MCF 10A (cell line): ENCODE measurements at regions of chr17 and their contacts with region 1.

Region 1: DNA sequence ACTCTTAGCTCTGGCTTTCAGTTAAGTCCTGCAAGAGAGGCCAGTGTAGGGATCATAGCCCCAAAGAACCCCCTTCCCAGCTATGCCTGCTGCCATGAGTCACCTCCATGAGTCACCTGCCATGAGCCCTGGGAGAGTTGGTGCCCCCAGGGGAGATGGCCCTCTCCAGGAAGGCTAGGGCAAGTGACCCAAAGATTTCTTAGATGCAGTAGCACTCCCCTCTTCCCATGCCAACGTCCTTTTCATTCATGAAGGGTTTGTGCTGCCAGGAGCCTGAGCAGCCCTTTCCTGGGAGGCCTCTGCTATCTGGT is 78.6 kb upstream of the LGALS9 start:
- DNase-seq: peak; percentile 94
- H3K4me3 Mint-ChIP-seq: no peak overlapping the region
- H3K27ac Mint-ChIP-seq: peak overlapping the region; percentile 20
- H3K4me1 Mint-ChIP-seq: peaks cover 30% of the 10 kb centered on the region
- H3K27me3 Mint-ChIP-seq: no peaks in the 10 kb centered on the region
- CTCF ChIP-seq: no peak

Region 2: DNA sequence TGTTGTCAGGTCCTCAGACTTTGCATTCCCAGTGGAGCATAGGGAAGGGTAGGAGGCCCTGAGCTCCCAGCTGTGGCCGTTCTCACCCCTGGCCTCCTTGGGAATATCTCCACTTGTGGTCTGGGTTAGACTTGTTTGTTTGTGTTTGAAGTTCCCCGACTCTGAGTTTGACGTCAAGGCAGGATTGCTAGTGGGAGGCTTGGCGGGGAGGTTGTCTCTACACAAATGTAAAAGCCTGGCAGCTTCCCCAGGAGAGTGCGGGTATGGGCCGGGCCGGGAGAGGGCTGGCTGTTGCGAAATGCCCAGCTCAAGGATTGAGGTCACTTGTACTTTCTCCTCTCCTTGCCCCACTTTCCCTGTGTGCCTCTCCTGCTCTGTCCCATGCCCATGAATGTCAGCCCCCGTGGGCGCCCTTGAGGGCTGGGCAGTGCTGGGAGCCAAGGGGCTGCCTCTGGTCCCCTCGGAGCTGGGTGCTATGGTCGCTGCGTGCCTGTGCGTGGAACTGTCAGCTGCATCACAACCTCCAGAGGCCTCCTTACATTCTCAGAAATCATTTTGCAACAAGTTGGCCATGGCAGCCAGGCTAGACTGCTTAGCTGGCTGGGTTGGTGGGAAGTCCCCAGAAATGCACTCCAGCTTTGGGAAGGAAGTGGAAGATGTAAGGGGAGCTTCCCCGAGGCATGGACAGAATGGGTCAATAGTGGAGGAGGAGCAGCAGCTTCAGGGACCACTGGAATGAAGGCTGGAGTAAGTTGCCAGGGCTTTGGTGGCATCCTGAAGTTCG is 11.9 kb before region 1 on chr17:
- CTCF ChIA-PET with region 1: no interaction called
- POLR2A ChIA-PET with region 1: interaction called, 15 read pairs
- intact Hi-C with region 1: no loop called
- DNase-seq: peak; percentile 99
- H3K4me3 Mint-ChIP-seq: peak overlapping the region; percentile 32
- H3K27ac Mint-ChIP-seq: peak overlapping the region; percentile 78
- H3K4me1 Mint-ChIP-seq: peaks cover 43% of the 10 kb centered on the region
- H3K27me3 Mint-ChIP-seq: no peaks in the 10 kb centered on the region
- CTCF ChIP-seq: no peak

Region 3: DNA sequence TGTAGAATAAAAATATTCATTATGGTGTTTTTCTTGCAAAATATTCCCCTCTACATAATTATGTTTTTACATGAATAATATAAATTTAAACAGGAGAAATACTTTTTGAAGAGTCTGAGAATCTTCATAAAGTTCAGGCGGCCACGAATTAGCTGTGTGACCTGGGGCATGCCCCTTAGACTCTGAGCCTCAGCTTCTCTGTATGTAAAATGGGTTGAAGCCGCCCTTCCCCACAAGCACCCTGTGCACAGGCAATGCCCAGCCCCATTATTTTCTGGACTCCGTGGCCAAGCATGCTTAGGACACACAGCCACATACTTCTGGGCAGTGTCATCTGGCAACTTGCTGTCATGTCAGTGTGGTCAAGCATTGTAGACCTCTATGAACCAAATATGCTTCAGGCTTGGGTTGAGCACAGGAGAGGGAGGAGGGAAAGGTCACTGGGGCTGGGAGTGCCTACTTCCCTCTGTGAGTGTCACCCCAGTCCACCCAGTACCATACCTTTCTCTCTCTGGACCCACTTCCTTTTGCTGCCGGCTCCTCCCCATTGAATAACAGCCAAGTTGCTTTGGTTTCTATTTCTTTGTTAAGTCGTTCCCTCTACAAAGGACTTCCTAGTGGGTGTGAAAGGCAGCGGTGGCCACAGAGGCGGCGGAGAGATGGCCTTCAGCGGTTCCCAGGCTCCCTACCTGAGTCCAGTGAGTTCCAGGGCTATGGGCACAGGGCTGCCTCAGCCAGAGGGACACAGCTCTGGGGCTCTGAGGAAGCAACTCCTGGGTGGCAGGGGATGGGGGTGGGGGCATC is 78.4 kb after region 1 on chr17 and contains the start of gene LGALS9:
- CTCF ChIA-PET with region 1: no interaction called
- POLR2A ChIA-PET with region 1: no interaction called
- intact Hi-C with region 1: no loop called
- DNase-seq: no peak
- H3K4me3 Mint-ChIP-seq: no peak within 1 kb of the TSS
- H3K27ac Mint-ChIP-seq: peak within 1 kb of the TSS; percentile 5
- H3K4me1 Mint-ChIP-seq: peaks cover 23% of the 10 kb centered on the region
- H3K27me3 Mint-ChIP-seq: no peaks in the 10 kb centered on the region
- CTCF ChIP-seq: no peak
- total RNA-seq, gene LGALS9: 0.44 and 0.54 TPM in 2 replicates

Region 4: DNA sequence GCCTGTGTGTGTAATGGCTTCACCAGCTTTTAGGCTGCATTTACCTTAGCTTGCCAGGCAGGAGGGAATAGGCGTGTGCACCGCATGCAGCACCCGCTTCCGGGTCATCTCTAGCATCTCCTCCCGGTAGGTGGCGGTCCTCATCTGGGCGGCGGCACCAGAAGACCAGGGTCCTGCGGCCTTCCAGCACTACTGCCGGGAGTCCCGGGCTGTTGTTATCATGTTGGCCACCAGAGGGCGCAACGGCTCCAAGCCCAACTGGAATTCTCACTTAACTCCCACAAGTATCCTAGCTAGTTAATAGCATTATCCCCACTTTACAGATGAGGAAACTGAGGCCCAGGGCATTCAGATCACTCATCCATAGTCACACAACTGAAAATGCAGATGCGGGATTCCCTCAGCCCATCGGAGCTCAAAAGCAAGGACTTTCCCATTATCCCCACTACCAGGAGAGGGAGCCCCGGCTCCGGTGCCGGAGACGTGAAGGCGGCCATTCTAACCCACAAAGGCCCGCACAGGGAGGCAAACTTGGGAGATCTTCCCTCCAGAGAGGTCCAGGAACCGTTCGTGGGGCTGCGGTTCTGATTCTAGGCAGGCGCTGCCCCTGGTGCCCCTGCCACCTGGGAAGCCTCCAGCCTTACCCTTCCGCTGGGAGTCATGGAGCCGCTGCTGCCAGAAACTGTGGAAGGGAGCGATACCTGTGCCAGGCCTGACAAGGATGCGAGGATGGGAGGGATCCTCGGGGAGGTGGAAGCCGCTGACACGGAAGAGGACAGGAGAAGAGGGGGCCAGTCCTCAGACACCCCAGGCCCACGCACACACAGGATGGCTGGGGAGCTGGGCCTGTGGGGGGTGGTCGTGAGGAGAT is 102.5 kb after region 1 on chr17:
- CTCF ChIA-PET with region 1: no interaction called
- POLR2A ChIA-PET with region 1: no interaction called
- intact Hi-C with region 1: no loop called
- DNase-seq: peak; percentile 65
- H3K4me3 Mint-ChIP-seq: no peak overlapping the region
- H3K27ac Mint-ChIP-seq: no peak overlapping the region
- H3K4me1 Mint-ChIP-seq: no peaks in the 10 kb centered on the region
- H3K27me3 Mint-ChIP-seq: peaks cover 13% of the 10 kb centered on the region
- CTCF ChIP-seq: peak; percentile 93